ENCODE measurements at regions of chr2 and their contacts with region 1.

Region 1: GRCh38 chr2:159840616-159841015 is 42.6 kb upstream of the CD302 start:
- DNase-seq: no peak
- ATAC-seq: no peak
- H3K4me3 ChIP-seq: no peak overlapping the region
- H3K27ac ChIP-seq: no peak overlapping the region
- H3K4me1 ChIP-seq: no peaks in the 10 kb centered on the region
- H3K27me3 ChIP-seq: no peaks in the 10 kb centered on the region
- CTCF ChIP-seq: no peak

Region 2: DNA sequence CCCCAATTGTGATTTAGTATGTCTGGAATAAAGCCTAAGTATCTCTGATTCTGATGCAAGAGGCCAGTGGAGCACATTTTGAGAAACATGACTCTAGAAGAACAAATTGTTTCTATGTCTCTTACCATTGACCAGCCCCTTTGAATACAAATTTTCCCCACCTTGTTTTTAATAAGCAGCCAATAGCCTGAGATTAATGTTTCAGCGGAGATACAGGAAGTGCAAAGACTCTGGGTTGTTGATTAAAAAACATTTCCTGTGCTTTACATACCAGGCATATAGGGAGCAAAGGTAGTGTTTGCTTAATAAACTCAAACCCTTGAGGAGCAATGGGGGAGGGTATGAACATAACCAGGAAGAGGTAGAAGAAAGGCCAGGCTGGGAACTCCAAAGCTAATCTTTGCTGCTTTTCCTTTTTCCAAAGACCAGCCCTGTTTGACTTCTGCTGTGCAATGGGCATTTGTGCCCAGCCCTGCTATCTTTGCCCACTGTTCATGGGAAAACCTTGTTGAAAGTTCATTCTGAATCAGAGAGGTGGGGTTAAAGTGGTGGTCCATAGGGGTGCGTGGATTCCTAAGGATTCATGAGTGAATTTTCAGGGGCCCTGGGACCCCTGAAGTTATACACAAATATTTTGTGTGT is 1709.7 kb before region 1 on chr2:
- intact Hi-C with region 1: no loop called
- DNase-seq: no peak
- ATAC-seq: no peak
- H3K4me3 ChIP-seq: no peak overlapping the region
- H3K27ac ChIP-seq: no peak overlapping the region
- H3K4me1 ChIP-seq: no peaks in the 10 kb centered on the region
- H3K27me3 ChIP-seq: no peaks in the 10 kb centered on the region
- CTCF ChIP-seq: no peak

Region 3: GRCh38 chr2:159677654-159678053 is 163.0 kb before region 1 on chr2:
- intact Hi-C with region 1: no loop called
- DNase-seq: no peak
- ATAC-seq: no peak
- H3K4me3 ChIP-seq: no peak overlapping the region
- H3K27ac ChIP-seq: no peak overlapping the region
- H3K4me1 ChIP-seq: no peaks in the 10 kb centered on the region
- H3K27me3 ChIP-seq: no peaks in the 10 kb centered on the region
- CTCF ChIP-seq: peak; percentile 36

Region 4: GRCh38 chr2:159773426-159773825 is 67.2 kb before region 1 on chr2:
- intact Hi-C with region 1: loop called in 1 of 2 experiments (anchors 2 kb)
- DNase-seq: no peak
- ATAC-seq: no peak
- H3K4me3 ChIP-seq: no peak overlapping the region
- H3K27ac ChIP-seq: no peak overlapping the region
- H3K4me1 ChIP-seq: no peaks in the 10 kb centered on the region
- H3K27me3 ChIP-seq: no peaks in the 10 kb centered on the region
- CTCF ChIP-seq: no peak

Measured in psoas muscle (tissue), 8 donors.